Right lobe of liver (tissue), 6 donors: ENCODE measurements at regions of chr16 and their contacts with region 1.

Region 1: GRCh38 chr16:788394-789126 is at the start of gene CHTF18:
- DNase-seq: peak; percentile 91 to 94 (median 93)
- ATAC-seq: peak; percentile 90 to 97 (median 92)
- H3K4me3 ChIP-seq: peak within 1 kb of the TSS; percentile 89 to 99 (median 92)
- H3K27ac ChIP-seq: peak within 1 kb of the TSS in 1 of 3 donors; percentile 13
- H3K4me1 ChIP-seq: peaks cover 0 to 13% (median 0%) of the 10 kb centered on the region in 4 donors
- H3K27me3 ChIP-seq: no peaks in the 10 kb centered on the region
- CTCF ChIP-seq: no peak
- POLR2A ChIP-seq: no peak
- total RNA-seq, gene CHTF18: 2.9 to 7.8 (median 4.6) TPM

Region 2: GRCh38 chr16:714558-715476 is 73.7 kb before region 1 on chr16 and contains the start of gene METRN:
- intact Hi-C with region 1: loop called in 1 of 2 experiments (anchors 5 kb)
- DNase-seq: peak; percentile 90 to 94 (median 93)
- ATAC-seq: peak; percentile 79 to 90 (median 84)
- H3K4me3 ChIP-seq: peak within 1 kb of the TSS; percentile 54 to 63 (median 58)
- H3K27ac ChIP-seq: no peak within 1 kb of the TSS
- H3K4me1 ChIP-seq: peaks cover 0 to 20% (median 2%) of the 10 kb centered on the region in 4 donors
- H3K27me3 ChIP-seq: no peaks in the 10 kb centered on the region
- CTCF ChIP-seq: no peak
- POLR2A ChIP-seq: no peak
- total RNA-seq, gene METRN: 14.0 to 43.7 (median 26.2) TPM

Region 3: DNA sequence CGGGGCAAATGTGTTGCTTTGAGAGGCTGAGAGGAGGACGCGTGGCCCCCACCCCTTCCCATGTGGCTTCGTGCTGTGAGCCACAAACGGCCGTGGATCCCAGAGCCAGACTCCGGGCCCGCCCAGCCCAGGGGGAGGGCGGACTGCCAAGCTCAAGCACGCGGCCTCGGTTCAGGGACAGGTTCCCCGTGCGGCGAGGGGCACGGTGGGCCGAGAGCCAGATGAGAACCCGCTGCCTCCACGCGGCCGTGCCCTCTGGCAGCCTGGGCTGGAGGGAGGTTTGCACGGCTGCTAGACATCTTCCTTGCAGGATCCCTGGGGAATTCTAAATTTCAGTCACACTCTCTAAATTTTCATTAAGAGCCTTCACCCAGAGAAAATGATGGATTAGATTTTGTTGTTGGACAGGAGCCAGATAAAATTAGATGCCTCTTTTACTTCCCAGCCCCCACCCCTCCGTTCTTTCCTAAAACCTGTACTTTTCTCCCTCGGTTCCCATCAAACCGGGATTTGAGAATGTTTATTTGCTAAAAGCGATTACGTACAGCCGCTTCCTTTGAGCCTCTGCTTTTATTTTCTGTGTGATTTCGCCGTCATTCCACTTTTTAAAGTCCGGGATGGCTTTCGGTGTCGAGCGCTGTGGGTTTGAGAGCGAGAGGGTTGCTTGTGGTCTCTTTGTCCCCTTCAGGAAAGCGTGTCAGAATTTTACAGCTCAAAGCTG is 36.9 kb after region 1 on chr16:
- intact Hi-C with region 1: no loop called
- DNase-seq: no peak
- ATAC-seq: no peak
- H3K4me3 ChIP-seq: no peak overlapping the region
- H3K27ac ChIP-seq: no peak overlapping the region
- H3K4me1 ChIP-seq: no peaks in the 10 kb centered on the region
- H3K27me3 ChIP-seq: no peaks in the 10 kb centered on the region
- CTCF ChIP-seq: no peak
- POLR2A ChIP-seq: no peak

Region 4: DNA sequence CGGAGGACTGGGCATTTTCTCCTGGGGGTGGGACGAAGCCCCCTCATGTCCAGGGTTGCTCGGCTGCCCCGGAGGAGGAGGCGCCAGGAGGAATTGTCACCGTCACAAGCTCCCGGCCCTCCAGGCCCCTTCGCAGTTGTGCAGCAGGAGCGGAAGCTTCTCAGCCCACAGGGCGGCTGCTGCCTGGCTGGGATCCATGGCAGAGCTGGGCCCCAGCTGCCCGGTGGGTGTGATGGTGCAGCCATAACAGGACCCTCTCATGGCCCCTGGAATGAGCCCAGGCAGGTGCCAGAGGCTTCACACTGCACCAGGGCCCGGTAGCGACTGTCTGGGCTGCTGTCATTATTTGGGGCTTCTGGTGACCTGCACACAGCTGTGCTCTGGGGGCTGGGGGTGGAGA is 66.9 kb after region 1 on chr16:
- intact Hi-C with region 1: no loop called
- DNase-seq: no peak
- ATAC-seq: no peak
- H3K4me3 ChIP-seq: no peak overlapping the region
- H3K27ac ChIP-seq: no peak overlapping the region
- H3K4me1 ChIP-seq: no peaks in the 10 kb centered on the region
- H3K27me3 ChIP-seq: no peaks in the 10 kb centered on the region
- CTCF ChIP-seq: no peak
- POLR2A ChIP-seq: no peak